CD4-positive, alpha-beta T cell (primary cell): ENCODE measurements at regions of chr17 and their contacts with region 1.

Region 1: GRCh38 chr17:28854457-28855350 is at the start of gene ERAL1:
- DNase-seq: peak; percentile 69 to 90 (median 76)
- ATAC-seq: peak; percentile 100
- H3K4me3 ChIP-seq: peak within 1 kb of the TSS; percentile 96
- H3K4me3 Mint-ChIP-seq: peak within 1 kb of the TSS; percentile 91
- H3K27ac ChIP-seq: peak within 1 kb of the TSS; percentile 70 to 72
- H3K27ac Mint-ChIP-seq: peak within 1 kb of the TSS; percentile 78
- H3K4me1 ChIP-seq: peaks cover 15% of the 10 kb centered on the region
- H3K4me1 Mint-ChIP-seq: peaks cover 18% of the 10 kb centered on the region
- H3K27me3 ChIP-seq: no peaks in the 10 kb centered on the region
- H3K27me3 Mint-ChIP-seq: no peaks in the 10 kb centered on the region
- CTCF ChIP-seq: no peak
- total RNA-seq, gene ERAL1: 15.6 to 16.8 TPM

Region 2: DNA sequence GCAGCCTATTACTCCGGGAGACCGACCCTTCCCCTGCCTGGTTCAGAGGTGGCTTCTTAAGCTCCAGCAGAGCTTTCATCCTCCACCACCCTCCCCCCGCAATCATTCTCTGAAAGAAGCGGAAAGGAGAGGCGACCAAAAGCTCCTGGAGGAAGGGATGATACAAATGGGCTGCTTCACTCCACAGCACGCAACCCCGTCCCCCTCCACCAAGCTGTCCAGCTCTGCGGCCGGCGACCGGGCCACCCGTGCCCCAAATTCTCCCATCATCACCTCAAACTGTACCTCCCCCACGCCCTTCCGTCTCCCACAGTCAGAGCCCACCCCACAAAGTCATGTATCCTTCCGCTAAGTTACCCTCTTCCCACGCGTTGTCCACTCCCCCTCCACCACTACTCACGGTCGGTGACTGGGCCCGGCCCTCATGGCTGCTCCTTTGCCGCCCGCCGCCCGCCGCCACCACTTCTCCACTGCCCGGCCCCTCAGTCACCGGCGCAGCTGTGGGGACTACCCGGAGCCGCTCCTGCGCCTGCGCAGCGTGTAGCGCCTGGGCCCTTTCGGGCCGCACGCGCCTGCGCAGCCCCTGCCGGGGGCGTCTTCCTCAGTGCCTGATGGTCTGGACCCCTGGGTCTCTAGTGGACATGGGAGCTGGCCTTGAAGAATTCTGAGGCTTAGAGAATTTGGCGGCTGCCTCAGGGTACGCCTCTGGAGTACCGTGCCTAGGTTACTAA is 12.3 kb before region 1 on chr17 and contains the start of gene FAM222B:
- CTCF ChIA-PET with region 1: interaction called, 5 read pairs
- POLR2A ChIA-PET with region 1: interaction called, 7 read pairs
- intact Hi-C with region 1: loop called in 1 of 2 experiments (anchors 1 kb)
- DNase-seq: peak; percentile 70 to 94 (median 83)
- ATAC-seq: peak; percentile 97
- H3K4me3 ChIP-seq: peak within 1 kb of the TSS; percentile 99
- H3K4me3 Mint-ChIP-seq: peak within 1 kb of the TSS; percentile 100
- H3K27ac ChIP-seq: peak within 1 kb of the TSS; percentile 78 to 80
- H3K27ac Mint-ChIP-seq: peak within 1 kb of the TSS; percentile 91
- H3K4me1 ChIP-seq: peaks cover 20% of the 10 kb centered on the region
- H3K4me1 Mint-ChIP-seq: peaks cover 27% of the 10 kb centered on the region
- H3K27me3 ChIP-seq: no peaks in the 10 kb centered on the region
- H3K27me3 Mint-ChIP-seq: no peaks in the 10 kb centered on the region
- CTCF ChIP-seq: no peak
- total RNA-seq, gene FAM222B: 17.3 to 17.5 TPM